ENCODE measurements at regions of chr3 and their contacts with region 1.

Region 1: GRCh38 chr3:122668930-122669730 is 11.5 kb upstream of the PARP14 start:
- DNase-seq: peak in 1 of 9 donors; percentile 46
- ATAC-seq: no peak
- H3K4me3 ChIP-seq: no peak overlapping the region
- H3K4me3 Mint-ChIP-seq: peak overlapping the region in 1 of 10 donors; percentile 19
- H3K27ac ChIP-seq: no peak overlapping the region
- H3K27ac Mint-ChIP-seq: peak overlapping the region in 1 of 9 donors; percentile 75
- H3K4me1 ChIP-seq: no peaks in the 10 kb centered on the region
- H3K4me1 Mint-ChIP-seq: peaks cover 0 to 18% (median 0%) of the 10 kb centered on the region in 7 donors
- H3K27me3 ChIP-seq: no peaks in the 10 kb centered on the region
- H3K27me3 Mint-ChIP-seq: peaks cover 0 to 8% (median 0%) of the 10 kb centered on the region in 5 donors

Region 2: GRCh38 chr3:122642935-122643334 is 26.2 kb before region 1 on chr3:
- CTCF ChIA-PET with region 1: no interaction called
- POLR2A ChIA-PET with region 1: no interaction called
- intact Hi-C with region 1: loop called in 1 of 2 experiments (anchors 2 kb)
- DNase-seq: no peak
- ATAC-seq: no peak
- H3K4me3 ChIP-seq: no peak overlapping the region
- H3K4me3 Mint-ChIP-seq: peak overlapping the region in 1 of 10 donors; percentile 68
- H3K27ac ChIP-seq: no peak overlapping the region
- H3K27ac Mint-ChIP-seq: peak overlapping the region in 2 of 9 donors; percentile 23 to 65
- H3K4me1 ChIP-seq: no peaks in the 10 kb centered on the region
- H3K4me1 Mint-ChIP-seq: peaks cover 2 to 47% (median 8%) of the 10 kb centered on the region in 7 donors
- H3K27me3 ChIP-seq: no peaks in the 10 kb centered on the region
- H3K27me3 Mint-ChIP-seq: peaks cover 0 to 14% (median 0%) of the 10 kb centered on the region in 5 donors

Region 3: GRCh38 chr3:122793568-122794416 is 124.7 kb after region 1 on chr3 and contains the start of gene HSPBAP1:
- CTCF ChIA-PET with region 1: no interaction called
- POLR2A ChIA-PET with region 1: no interaction called
- intact Hi-C with region 1: no loop called
- DNase-seq: peak; percentile 71 to 90 (median 86)
- ATAC-seq: peak; percentile 77
- H3K4me3 ChIP-seq: peak within 1 kb of the TSS; percentile 83
- H3K4me3 Mint-ChIP-seq: peak within 1 kb of the TSS in 5 of 10 donors; percentile 91 to 97 (median 95)
- H3K27ac ChIP-seq: peak within 1 kb of the TSS; percentile 82
- H3K27ac Mint-ChIP-seq: peak within 1 kb of the TSS in 6 of 9 donors; percentile 79 to 99 (median 96)
- H3K4me1 ChIP-seq: peaks cover 22 to 34% of the 10 kb centered on the region in 2 donors
- H3K4me1 Mint-ChIP-seq: peaks cover 20 to 29% (median 27%) of the 10 kb centered on the region in 7 donors
- H3K27me3 ChIP-seq: no peaks in the 10 kb centered on the region
- H3K27me3 Mint-ChIP-seq: no peaks in the 10 kb centered on the region
- total RNA-seq, gene HSPBAP1: 9.0 to 31.5 (median 23.3) TPM

Measured in naive thymus-derived CD4-positive, alpha-beta T cell (primary cell).